Activated naive CD4-positive, alpha-beta T cell treated with anti-CD3 and anti-CD28 coated beads for 36 hours (primary cell): ENCODE measurements at regions of chr4 and their contacts with region 1.

Region 1: GRCh38 chr4:38319456-38320342 is 344.3 kb upstream of the KLF3 start:
- DNase-seq: peak; percentile 98
- H3K4me3 Mint-ChIP-seq: peak overlapping the region; percentile 76
- H3K27ac Mint-ChIP-seq: peak overlapping the region; percentile 89
- H3K4me1 Mint-ChIP-seq: peaks cover 46% of the 10 kb centered on the region
- H3K27me3 Mint-ChIP-seq: no peaks in the 10 kb centered on the region

Region 2: GRCh38 chr4:37826295-37827029 is 493.2 kb before region 1 on chr4 and contains the start of gene PGM2:
- CTCF ChIA-PET with region 1: no interaction called
- intact Hi-C with region 1: loop called (anchors 10 kb)
- DNase-seq: peak; percentile 92
- H3K4me3 Mint-ChIP-seq: peak within 1 kb of the TSS; percentile 100
- H3K27ac Mint-ChIP-seq: peak within 1 kb of the TSS; percentile 91
- H3K4me1 Mint-ChIP-seq: peaks cover 33% of the 10 kb centered on the region
- H3K27me3 Mint-ChIP-seq: no peaks in the 10 kb centered on the region
- total RNA-seq, gene PGM2: 53.7 to 53.9 TPM

Region 3: GRCh38 chr4:38062088-38062893 is 257.4 kb before region 1 on chr4:
- CTCF ChIA-PET with region 1: no interaction called
- intact Hi-C with region 1: loop called (anchors 1 kb)
- DNase-seq: peak; percentile 84
- H3K4me3 Mint-ChIP-seq: peak overlapping the region; percentile 79
- H3K27ac Mint-ChIP-seq: peak overlapping the region; percentile 75
- H3K4me1 Mint-ChIP-seq: peaks cover 12% of the 10 kb centered on the region
- H3K27me3 Mint-ChIP-seq: no peaks in the 10 kb centered on the region

Region 4: GRCh38 chr4:38366456-38366855 is 46.8 kb after region 1 on chr4:
- CTCF ChIA-PET with region 1: no interaction called
- intact Hi-C with region 1: no loop called
- DNase-seq: no peak
- H3K4me3 Mint-ChIP-seq: no peak overlapping the region
- H3K27ac Mint-ChIP-seq: no peak overlapping the region
- H3K4me1 Mint-ChIP-seq: peaks cover 33% of the 10 kb centered on the region
- H3K27me3 Mint-ChIP-seq: no peaks in the 10 kb centered on the region

Region 5: DNA sequence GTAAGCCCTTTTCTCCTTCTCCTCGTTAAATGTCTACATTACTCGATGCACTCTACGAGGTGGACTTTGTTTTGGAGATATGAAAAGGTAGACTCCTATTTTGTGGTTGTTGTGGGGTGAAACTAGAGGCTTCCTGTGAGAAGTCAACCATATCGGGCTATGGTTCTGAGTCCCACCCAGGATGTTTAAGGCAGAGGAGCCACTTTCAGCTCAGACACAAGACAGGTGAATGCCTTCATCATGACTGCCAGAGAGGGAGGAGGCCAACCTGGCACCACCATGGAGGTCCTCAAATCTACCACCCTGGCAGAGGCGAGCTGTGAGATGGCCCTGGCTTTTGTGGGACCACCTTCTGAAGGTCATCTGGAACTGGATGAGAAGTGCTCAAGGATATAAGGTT is 189.9 kb after region 1 on chr4:
- CTCF ChIA-PET with region 1: interaction called, 8 read pairs
- intact Hi-C with region 1: loop called (anchors 2 kb)
- DNase-seq: peak; percentile 62
- H3K4me3 Mint-ChIP-seq: peak overlapping the region; percentile 53
- H3K27ac Mint-ChIP-seq: no peak overlapping the region
- H3K4me1 Mint-ChIP-seq: peaks cover 86% of the 10 kb centered on the region
- H3K27me3 Mint-ChIP-seq: no peaks in the 10 kb centered on the region

Region 6: GRCh38 chr4:38560768-38561558 is 241.3 kb after region 1 on chr4:
- CTCF ChIA-PET with region 1: no interaction called
- intact Hi-C with region 1: loop called (anchors 2 kb)
- DNase-seq: peak; percentile 60
- H3K4me3 Mint-ChIP-seq: no peak overlapping the region
- H3K27ac Mint-ChIP-seq: no peak overlapping the region
- H3K4me1 Mint-ChIP-seq: peaks cover 16% of the 10 kb centered on the region
- H3K27me3 Mint-ChIP-seq: peaks cover 2% of the 10 kb centered on the region

Region 7: GRCh38 chr4:38601244-38601897 is 281.7 kb after region 1 on chr4:
- CTCF ChIA-PET with region 1: no interaction called
- intact Hi-C with region 1: loop called (anchors 2 kb)
- DNase-seq: no peak
- H3K4me3 Mint-ChIP-seq: no peak overlapping the region
- H3K27ac Mint-ChIP-seq: no peak overlapping the region
- H3K4me1 Mint-ChIP-seq: peaks cover 20% of the 10 kb centered on the region
- H3K27me3 Mint-ChIP-seq: no peaks in the 10 kb centered on the region

Region 8: DNA sequence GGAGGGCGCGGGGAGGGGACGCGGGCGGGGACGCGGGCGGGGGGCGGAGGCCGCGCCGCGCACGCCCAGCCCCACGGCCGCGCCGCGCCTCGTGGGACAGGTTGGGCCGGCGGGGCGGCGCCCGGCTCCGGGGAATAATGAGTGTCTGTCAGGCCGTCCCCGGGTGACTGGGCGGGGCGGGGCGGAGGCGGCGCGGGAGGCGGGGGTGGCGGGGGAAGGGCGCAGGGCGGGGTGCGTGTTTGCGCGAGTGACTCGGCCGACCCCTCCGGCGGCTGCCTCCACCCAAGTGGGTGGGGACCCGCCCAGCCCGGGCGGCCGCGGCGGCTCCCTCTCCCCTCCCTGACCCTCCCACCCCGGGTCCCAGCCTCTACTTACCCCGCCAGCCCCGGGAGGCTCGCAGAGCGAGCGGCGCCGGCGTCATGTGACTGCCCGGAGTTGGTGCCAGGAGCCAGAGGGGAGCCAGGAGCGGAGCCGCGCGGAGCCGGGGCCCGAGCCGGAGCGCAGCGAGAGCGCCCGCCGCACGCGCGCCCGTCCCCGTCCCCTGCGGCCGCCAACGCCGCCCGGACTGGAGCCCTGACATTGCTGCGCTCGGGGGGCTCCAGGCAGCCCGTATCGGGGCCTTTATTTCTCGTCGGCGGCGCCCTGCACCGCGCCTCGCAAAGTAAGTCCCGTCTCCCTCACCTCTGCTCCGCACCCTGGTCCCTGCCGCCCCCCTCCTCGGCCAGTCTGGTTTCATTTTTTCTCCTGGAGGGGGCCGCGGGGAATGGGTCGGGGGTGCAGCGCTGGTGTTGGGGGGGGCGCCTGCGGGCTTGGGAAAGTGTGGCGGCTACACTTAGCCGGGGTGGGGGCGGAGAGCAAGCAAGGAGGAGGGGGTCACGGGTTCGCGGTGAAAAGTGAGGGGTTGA is 344.4 kb after region 1 on chr4 and contains the start of gene KLF3:
- CTCF ChIA-PET with region 1: interaction called, 32 read pairs
- intact Hi-C with region 1: no loop called
- DNase-seq: peak; percentile 86
- H3K4me3 Mint-ChIP-seq: peak within 1 kb of the TSS; percentile 79
- H3K27ac Mint-ChIP-seq: peak within 1 kb of the TSS; percentile 87
- H3K4me1 Mint-ChIP-seq: peaks cover 66% of the 10 kb centered on the region
- H3K27me3 Mint-ChIP-seq: no peaks in the 10 kb centered on the region
- total RNA-seq, gene KLF3: 15.2 to 15.8 TPM